Tibial artery (tissue), 4 donors: ENCODE measurements at regions of chr20 and their contacts with region 1.

Region 1: GRCh38 chr20:47272893-47273590 is 83.5 kb downstream of the ZMYND8 start:
- DNase-seq: peak; percentile 36 to 60
- H3K4me3 ChIP-seq: no peak overlapping the region
- H3K27ac ChIP-seq: peak overlapping the region; percentile 90 to 94
- H3K4me1 ChIP-seq: peaks cover 3 to 64% (median 53%) of the 10 kb centered on the region in 4 donors
- H3K27me3 ChIP-seq: no peaks in the 10 kb centered on the region
- CTCF ChIP-seq: peak; percentile 84 to 98

Region 2: DNA sequence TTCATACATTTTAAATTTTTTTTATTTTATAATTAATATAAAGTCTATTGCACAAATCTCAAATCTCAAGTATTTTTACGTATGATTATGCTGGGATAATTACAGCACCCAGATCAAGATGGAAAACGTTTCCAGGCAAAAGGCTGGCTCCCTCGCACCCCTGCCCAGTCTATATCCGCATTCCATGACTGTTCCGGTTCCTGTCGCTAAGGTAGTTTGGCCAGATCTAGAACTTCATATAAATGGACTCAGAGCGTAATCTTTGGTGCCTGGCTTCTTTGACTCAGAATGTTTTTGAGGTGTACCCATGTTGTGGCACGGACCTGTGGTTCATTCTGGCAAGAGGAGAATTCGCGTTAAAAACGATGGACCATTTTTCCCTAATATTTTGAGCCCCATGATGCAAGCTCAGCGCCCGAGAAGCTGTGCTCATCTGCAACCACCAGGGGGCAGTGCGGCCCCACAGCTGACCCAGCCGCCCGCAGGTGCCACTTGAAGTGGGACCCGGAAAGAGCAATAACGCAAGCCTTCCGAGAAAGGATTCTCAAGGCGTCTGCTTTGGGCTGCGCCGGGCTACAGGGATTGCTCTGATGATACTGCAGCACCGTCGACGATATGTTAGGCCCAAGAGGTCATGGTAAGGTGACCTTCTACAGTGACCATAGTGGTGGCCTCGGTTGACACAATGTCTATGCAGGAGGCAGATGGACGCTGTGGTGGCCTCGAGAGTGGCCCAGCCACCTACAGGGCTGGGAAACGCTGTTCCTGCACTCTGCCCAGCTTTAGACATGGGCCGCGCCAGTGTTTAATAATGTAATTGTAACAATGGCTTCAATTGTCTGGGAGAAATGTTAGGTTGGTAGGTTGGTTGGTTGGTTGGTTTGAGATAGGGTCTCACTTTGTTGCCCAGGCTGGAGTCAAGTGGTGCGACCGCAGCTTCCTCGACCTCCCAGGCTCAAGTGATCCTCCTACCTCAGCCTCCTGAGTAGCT is 76.7 kb before region 1 on chr20:
- intact Hi-C with region 1: loop called (anchors 5 kb)
- DNase-seq: peak; percentile 56 to 80
- H3K4me3 ChIP-seq: peak overlapping the region in 1 of 2 donors; percentile 6
- H3K27ac ChIP-seq: no peak overlapping the region
- H3K4me1 ChIP-seq: peaks cover 0 to 8% (median 0%) of the 10 kb centered on the region in 4 donors
- H3K27me3 ChIP-seq: no peaks in the 10 kb centered on the region
- CTCF ChIP-seq: peak; percentile 94 to 98

Region 3: GRCh38 chr20:47317127-47317895 is 44.3 kb after region 1 on chr20:
- intact Hi-C with region 1: loop called (anchors 5 kb)
- DNase-seq: peak; percentile 88 to 94
- H3K4me3 ChIP-seq: peak overlapping the region; percentile 34 to 41
- H3K27ac ChIP-seq: peak overlapping the region; percentile 90 to 95
- H3K4me1 ChIP-seq: peaks cover 4 to 77% (median 67%) of the 10 kb centered on the region in 4 donors
- H3K27me3 ChIP-seq: no peaks in the 10 kb centered on the region
- CTCF ChIP-seq: peak in 1 of 2 experiments; percentile 43

Region 4: GRCh38 chr20:47379433-47380150 is 106.5 kb after region 1 on chr20:
- intact Hi-C with region 1: loop called (anchors 1 kb)
- DNase-seq: no peak
- H3K4me3 ChIP-seq: no peak overlapping the region
- H3K27ac ChIP-seq: no peak overlapping the region
- H3K4me1 ChIP-seq: peaks cover 0 to 12% (median 7%) of the 10 kb centered on the region in 4 donors
- H3K27me3 ChIP-seq: no peaks in the 10 kb centered on the region
- CTCF ChIP-seq: no peak

Region 5: GRCh38 chr20:47464380-47465101 is 191.5 kb after region 1 on chr20:
- intact Hi-C with region 1: loop called (anchors 10 kb)
- DNase-seq: peak; percentile 90 to 93
- H3K4me3 ChIP-seq: no peak overlapping the region
- H3K27ac ChIP-seq: peak overlapping the region; percentile 86 to 91
- H3K4me1 ChIP-seq: peaks cover 0 to 47% (median 24%) of the 10 kb centered on the region in 4 donors
- H3K27me3 ChIP-seq: no peaks in the 10 kb centered on the region
- CTCF ChIP-seq: peak; percentile 62 to 85